Left lung (tissue), 14 donors: ENCODE measurements at regions of chr1 and their contacts with region 1.

Region 1: GRCh38 chr1:205591522-205592351 is 40.1 kb downstream of the ELK4 start:
- DNase-seq: peak; percentile 82 to 96 (median 88)
- ATAC-seq: peak; percentile 98
- H3K4me3 ChIP-seq: peak overlapping the region; percentile 10 to 17
- H3K27ac ChIP-seq: no peak overlapping the region
- H3K4me1 ChIP-seq: peaks cover 0 to 35% of the 10 kb centered on the region in 2 donors
- H3K27me3 ChIP-seq: no peaks in the 10 kb centered on the region
- CTCF ChIP-seq: peak; percentile 91 to 98

Region 2: DNA sequence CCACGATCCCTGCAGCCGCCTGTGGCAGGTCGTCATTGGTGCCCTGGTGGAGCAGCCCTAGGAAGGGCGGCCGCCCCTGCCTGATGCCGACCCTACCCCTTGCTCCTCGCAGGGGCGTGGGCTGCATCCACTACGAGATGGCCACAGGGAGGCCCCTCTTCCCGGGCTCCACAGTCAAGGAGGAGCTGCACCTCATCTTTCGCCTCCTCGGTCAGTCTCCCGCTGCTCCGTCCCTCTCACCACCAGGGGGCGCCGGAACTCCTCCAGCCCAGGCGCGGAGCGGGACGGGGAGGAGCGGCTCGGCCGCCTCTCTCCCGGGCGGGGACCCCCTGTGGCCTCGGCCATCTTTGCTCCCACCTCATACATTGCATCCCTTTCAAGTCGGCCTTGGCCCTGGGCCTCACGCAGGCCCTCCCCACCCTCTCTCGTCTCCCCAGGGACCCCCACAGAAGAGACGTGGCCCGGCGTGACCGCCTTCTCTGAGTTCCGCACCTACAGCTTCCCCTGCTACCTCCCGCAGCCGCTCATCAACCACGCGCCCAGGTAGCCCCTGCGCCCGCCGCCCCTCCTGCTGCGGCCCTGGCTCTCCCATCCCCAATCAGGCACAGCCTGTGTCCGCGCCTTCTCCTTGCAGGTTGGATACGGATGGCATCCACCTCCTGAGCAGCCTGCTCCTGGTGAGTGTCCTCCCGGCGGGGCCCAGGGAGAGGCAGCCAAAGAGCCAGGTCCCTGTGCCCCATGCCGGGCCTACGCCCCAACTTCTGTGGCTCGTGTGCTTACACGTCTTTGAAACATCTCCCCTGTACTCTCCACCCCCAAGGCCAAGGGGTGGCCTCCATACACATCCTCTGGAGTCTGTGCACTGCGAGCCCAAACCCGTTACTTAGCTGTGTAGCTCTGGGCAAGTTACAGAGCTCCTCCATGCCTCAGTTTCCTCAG is 62.6 kb before region 1 on chr1:
- intact Hi-C with region 1: loop called in 1 of 2 experiments (anchors 10 kb)
- DNase-seq: peak; percentile 69 to 97 (median 84)
- ATAC-seq: peak; percentile 90
- H3K4me3 ChIP-seq: peak overlapping the region; percentile 23 to 28
- H3K27ac ChIP-seq: no peak overlapping the region
- H3K4me1 ChIP-seq: peaks cover 0 to 9% of the 10 kb centered on the region in 2 donors
- H3K27me3 ChIP-seq: no peaks in the 10 kb centered on the region
- CTCF ChIP-seq: peak; percentile 91 to 95

Region 3: DNA sequence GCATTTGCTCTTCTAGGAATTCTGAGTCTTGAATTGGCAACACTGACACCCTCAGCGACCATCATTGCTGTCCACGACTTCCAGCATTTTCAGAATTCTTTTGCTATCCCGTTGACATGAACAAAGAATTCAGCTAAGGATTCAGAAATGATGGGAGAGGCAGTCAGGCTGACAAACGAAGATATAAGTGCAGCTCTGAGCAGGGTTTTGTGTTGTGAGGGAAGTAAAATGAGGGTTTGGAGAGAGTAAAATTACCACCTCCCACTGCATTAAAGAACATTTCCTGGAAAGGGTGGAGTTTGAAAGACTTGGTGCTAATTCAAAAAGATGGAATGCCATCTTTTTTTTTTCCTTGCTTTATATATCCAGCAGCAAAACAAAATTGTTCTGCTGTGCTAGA is 45.0 kb after region 1 on chr1:
- intact Hi-C with region 1: loop called in 1 of 2 experiments (anchors 5 kb)
- DNase-seq: no peak
- ATAC-seq: no peak
- H3K4me3 ChIP-seq: no peak overlapping the region
- H3K27ac ChIP-seq: peak overlapping the region in 1 of 2 donors; percentile 44
- H3K4me1 ChIP-seq: peaks cover 0 to 10% of the 10 kb centered on the region in 2 donors
- H3K27me3 ChIP-seq: no peaks in the 10 kb centered on the region
- CTCF ChIP-seq: no peak

Region 4: DNA sequence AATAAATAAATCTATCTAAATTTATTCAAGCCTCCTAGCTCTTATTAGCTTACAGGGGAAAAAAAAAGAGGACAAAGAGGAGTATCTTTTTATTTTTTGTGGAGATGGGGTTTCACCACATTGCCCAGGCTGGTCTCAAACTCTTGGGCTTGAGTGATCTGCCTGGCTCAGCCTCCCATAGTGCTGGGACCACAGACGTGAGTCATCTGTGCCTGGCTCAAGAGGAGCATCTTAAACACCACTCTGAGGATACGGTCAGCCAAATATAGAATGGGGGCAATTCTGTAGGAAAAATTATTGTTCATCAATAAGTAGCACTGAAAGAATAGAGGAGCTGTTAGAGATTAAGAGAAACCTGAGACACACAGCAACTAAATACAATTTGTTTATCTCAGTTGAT is 64.5 kb after region 1 on chr1:
- intact Hi-C with region 1: loop called in 1 of 2 experiments (anchors 2 kb)
- DNase-seq: no peak
- ATAC-seq: no peak
- H3K4me3 ChIP-seq: no peak overlapping the region
- H3K27ac ChIP-seq: no peak overlapping the region
- H3K4me1 ChIP-seq: peaks cover 3 to 4% of the 10 kb centered on the region in 2 donors
- H3K27me3 ChIP-seq: no peaks in the 10 kb centered on the region
- CTCF ChIP-seq: no peak

Region 5: GRCh38 chr1:205750138-205751035 is 158.7 kb after region 1 on chr1 and contains the start of gene NUCKS1:
- intact Hi-C with region 1: no loop called
- DNase-seq: peak; percentile 94 to 98 (median 98)
- ATAC-seq: peak; percentile 82
- H3K4me3 ChIP-seq: peak within 1 kb of the TSS; percentile 59 to 88
- H3K27ac ChIP-seq: peak within 1 kb of the TSS; percentile 94 to 98
- H3K4me1 ChIP-seq: peaks cover 21 to 31% of the 10 kb centered on the region in 2 donors
- H3K27me3 ChIP-seq: no peaks in the 10 kb centered on the region
- CTCF ChIP-seq: no peak
- polyA plus RNA-seq, gene NUCKS1: 366 to 481 (median 378) TPM

Region 6: GRCh38 chr1:205998457-205999241 is 406.9 kb after region 1 on chr1:
- intact Hi-C with region 1: no loop called
- DNase-seq: no peak
- ATAC-seq: no peak
- H3K4me3 ChIP-seq: no peak overlapping the region
- H3K27ac ChIP-seq: no peak overlapping the region
- H3K4me1 ChIP-seq: peaks cover 19 to 33% of the 10 kb centered on the region in 2 donors
- H3K27me3 ChIP-seq: no peaks in the 10 kb centered on the region
- CTCF ChIP-seq: no peak